ENCODE measurements at regions of chr2 and their contacts with region 1.

Region 1: DNA sequence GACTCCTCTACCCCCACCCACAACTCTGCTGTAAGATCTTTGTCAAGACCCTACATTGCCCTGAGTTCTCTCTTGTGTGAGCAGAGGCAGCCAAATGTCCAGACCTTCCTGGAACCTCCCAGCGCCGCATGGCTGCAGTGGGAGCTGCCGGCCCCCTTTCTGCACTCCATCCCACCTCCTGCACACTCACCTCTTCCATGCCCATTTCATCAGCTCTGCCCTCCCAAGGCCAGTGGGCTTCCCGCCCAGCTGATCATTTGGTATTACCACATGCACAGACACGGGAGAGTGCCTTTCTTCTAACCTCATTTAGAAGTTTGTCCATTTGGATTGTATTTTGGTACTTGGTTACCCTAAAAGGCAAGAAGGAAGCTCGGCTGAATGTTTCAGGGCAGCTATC is 2.0 kb downstream of the IL1R2 start:
- DNase-seq: no peak
- H3K4me3 ChIP-seq: no peak overlapping the region
- H3K27ac ChIP-seq: no peak overlapping the region
- H3K4me1 ChIP-seq: 0 out of 7 replicates have a peak, but pooled peaks cover 0 to 2% (median 0%) of the 10 kb centered on the region in 4 experiments
- H3K27me3 ChIP-seq: no peaks in the 10 kb centered on the region
- CTCF ChIP-seq: no peak
- EP300 ChIP-seq: no peak
- POLR2A ChIP-seq: no peak
- RAD21 ChIP-seq: no peak

Region 2: GRCh38 chr2:101844055-101844635 is 149.6 kb before region 1 on chr2:
- CTCF ChIA-PET with region 1: no interaction called
- POLR2A ChIA-PET with region 1: no interaction called
- DNase-seq: no peak
- H3K4me3 ChIP-seq: no peak overlapping the region
- H3K27ac ChIP-seq: no peak overlapping the region
- H3K4me1 ChIP-seq: no peaks in the 10 kb centered on the region
- H3K27me3 ChIP-seq: no peaks in the 10 kb centered on the region
- CTCF ChIP-seq: no peak
- EP300 ChIP-seq: no peak
- POLR2A ChIP-seq: no peak
- RAD21 ChIP-seq: no peak

Region 3: GRCh38 chr2:102005989-102006885 is 12.5 kb after region 1 on chr2:
- CTCF ChIA-PET with region 1: interaction called, 26 read pairs
- POLR2A ChIA-PET with region 1: no interaction called
- DNase-seq: peak; percentile 9 to 67
- H3K4me3 ChIP-seq: no peak overlapping the region
- H3K27ac ChIP-seq: no peak overlapping the region
- H3K4me1 ChIP-seq: no peaks in the 10 kb centered on the region
- H3K27me3 ChIP-seq: no peaks in the 10 kb centered on the region; a peak in 2 of 7 replicates
- CTCF ChIP-seq: peak; percentile 48 to 84 (median 74)
- EP300 ChIP-seq: no peak
- POLR2A ChIP-seq: no peak
- RAD21 ChIP-seq: peak; percentile 70 to 80